ENCODE measurements at regions of chr12 and their contacts with region 1.

Region 1: GRCh38 chr12:95217377-95218149 is at the starts of genes FGD6 and VEZT:
- DNase-seq: peak; percentile 95
- CTCF ChIP-seq: peak; percentile 68

Region 2: DNA sequence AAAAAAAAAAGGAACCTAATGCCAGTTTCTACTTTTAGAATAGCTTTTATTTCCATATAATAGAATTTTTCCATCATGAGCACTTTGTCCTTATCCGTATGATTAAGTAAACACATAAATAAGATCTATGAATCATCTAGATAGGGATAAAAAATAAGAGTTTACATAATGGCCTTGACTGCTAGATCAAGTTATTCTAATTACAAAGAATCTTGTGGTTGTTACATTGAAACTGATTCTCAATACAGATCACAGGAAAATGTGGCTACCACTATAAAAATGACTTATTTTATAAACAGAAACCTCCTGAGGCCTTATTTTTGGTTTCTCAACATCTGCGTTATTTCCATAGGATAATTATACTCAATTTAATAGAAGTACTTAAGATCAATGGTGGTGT is 179.7 kb before region 1 on chr12:
- CTCF ChIA-PET with region 1: no interaction called
- POLR2A ChIA-PET with region 1: no interaction called
- DNase-seq: no peak
- CTCF ChIP-seq: no peak

Region 3: DNA sequence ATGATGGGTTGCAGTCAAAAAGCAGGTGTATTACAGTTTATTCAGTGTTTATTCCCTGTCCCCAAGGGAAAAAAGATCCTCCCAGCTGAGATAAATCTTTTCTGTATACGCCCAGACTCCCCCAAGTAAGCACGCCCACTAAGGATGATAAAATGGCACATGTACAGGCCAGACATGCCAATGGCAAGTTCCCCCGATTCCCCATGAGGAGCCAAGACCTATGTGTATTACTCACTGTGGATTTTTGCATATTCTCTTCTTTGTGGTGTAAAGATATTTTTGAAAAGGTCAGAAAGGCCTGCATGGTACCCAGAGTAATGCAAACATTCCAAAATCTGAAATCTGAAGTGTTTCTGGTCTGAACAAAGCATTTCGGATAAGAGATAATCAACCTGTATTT is 166.3 kb before region 1 on chr12:
- CTCF ChIA-PET with region 1: no interaction called
- POLR2A ChIA-PET with region 1: no interaction called
- DNase-seq: no peak
- CTCF ChIP-seq: no peak

Region 4: DNA sequence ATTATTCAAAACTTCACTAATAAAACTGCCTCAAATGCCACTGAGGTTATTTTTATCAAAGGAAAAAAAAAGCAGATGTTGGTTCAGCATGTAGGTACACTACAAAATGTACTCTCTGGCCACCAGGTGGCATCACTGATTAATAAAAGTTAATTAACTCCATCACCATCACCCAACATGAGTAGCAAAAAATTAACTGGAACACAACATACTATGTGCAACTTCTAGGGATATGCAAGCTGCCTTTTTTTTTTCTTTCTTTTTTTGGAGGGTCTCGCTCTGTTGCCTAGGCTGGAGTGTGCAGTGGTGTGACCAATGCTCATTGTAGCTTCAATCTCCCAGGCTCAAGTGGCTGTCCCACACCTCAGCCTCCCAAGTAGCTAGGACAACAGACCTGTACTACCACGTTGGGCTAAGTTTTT is 100.4 kb before region 1 on chr12:
- CTCF ChIA-PET with region 1: interaction called, 33 read pairs
- POLR2A ChIA-PET with region 1: no interaction called
- DNase-seq: peak; percentile 64
- CTCF ChIP-seq: peak; percentile 59

Region 5: GRCh38 chr12:95185072-95185471 is 32.5 kb before region 1 on chr12:
- CTCF ChIA-PET with region 1: interaction called, 17 read pairs
- POLR2A ChIA-PET with region 1: no interaction called
- DNase-seq: no peak
- CTCF ChIP-seq: no peak

Region 6: GRCh38 chr12:95198914-95199313 is 18.6 kb before region 1 on chr12:
- CTCF ChIA-PET with region 1: interaction called, 17 read pairs
- POLR2A ChIA-PET with region 1: no interaction called
- DNase-seq: peak; percentile 43
- CTCF ChIP-seq: no peak

Region 7: GRCh38 chr12:95204141-95204866 is 13.3 kb before region 1 on chr12:
- CTCF ChIA-PET with region 1: interaction called, 17 read pairs
- POLR2A ChIA-PET with region 1: interaction called, 3 read pairs
- DNase-seq: no peak
- CTCF ChIP-seq: no peak

Region 8: DNA sequence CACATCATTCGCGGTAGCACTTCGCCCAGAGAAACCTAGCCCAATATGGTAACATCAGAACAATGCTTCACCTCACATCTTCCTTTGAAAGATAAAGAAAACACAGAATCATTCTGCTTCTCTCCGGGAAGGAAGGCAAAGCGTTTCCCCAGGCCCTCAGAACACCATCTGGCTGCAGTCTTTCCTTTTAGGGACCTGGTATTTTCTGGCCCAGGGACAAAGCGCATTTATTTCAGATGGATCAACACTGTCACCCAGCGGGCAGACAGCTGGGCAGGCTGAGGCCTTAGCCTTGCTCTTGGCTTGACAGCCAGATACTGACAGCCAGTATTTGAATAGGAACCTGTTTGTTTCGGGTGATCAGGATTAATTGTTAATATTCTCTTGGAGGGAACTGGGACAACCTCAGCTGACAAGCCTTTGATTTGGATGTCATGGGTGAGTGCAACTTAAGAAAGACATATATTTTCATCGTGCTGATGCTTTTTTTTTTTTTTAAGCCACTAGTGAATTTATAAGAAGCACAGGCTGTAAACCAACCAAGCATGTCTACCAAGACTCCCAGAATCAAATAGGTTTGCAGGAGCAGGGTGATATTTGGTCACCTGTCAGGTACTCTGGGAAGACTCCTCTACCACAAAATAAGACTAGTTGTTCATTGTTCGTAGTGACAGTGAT is 119.0 kb after region 1 on chr12:
- CTCF ChIA-PET with region 1: no interaction called
- POLR2A ChIA-PET with region 1: no interaction called
- DNase-seq: no peak
- CTCF ChIP-seq: peak; percentile 5